ENCODE measurements at regions of chr12 and their contacts with region 1.

Region 1: DNA sequence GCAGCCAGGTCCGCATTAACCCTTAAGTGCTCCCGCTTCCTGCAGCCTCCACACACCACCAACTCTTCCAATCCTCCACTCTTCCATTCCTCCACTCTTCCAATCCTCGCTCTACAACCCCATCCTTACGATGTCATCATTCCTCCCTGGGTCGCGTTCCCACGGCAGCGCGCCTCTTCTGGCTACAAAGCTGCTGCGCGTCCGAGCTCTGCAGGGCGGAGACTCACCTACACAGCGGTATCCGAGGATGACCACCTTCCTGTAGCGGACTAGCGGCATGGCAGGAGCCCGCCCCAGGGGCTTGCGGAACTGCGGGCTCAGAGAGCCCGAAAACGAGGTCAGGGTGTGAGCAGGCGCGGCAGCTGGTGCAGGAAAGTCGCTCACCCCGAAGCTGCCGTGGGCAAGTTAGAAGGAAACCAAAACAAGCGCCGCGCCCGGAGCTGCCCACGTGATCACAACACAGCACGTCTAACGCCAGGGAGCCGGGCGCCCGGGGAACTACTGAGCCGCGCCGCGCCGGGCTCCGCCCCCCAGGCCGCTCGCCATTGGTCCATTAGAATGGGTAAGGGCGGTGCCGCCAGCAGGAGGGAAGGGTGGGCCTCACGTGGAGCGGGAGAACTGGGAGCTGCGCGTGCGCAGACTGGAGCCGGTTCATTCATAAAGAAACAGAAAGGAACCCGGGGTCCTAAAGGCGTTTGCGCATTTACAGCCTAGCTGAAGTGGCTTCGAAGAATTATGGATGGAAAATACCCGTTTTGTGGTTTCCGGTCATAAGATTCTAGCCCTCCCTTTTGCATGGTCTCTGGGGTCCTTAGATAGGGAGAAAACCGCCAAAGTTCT is at the start of gene RHEBL1:
- DNase-seq: peak; percentile 98
- ATAC-seq: peak; percentile 99
- H3K4me3 ChIP-seq: peak within 1 kb of the TSS; percentile 91
- H3K27ac ChIP-seq: no peak within 1 kb of the TSS
- H3K4me1 ChIP-seq: peaks cover 10% of the 10 kb centered on the region; the same call in 1 of the 2 replicates
- H3K27me3 ChIP-seq: no peaks in the 10 kb centered on the region
- CTCF ChIP-seq: peak; percentile 38
- total RNA-seq, gene RHEBL1: 4.2 and 5.0 TPM in 2 replicates

Region 2: DNA sequence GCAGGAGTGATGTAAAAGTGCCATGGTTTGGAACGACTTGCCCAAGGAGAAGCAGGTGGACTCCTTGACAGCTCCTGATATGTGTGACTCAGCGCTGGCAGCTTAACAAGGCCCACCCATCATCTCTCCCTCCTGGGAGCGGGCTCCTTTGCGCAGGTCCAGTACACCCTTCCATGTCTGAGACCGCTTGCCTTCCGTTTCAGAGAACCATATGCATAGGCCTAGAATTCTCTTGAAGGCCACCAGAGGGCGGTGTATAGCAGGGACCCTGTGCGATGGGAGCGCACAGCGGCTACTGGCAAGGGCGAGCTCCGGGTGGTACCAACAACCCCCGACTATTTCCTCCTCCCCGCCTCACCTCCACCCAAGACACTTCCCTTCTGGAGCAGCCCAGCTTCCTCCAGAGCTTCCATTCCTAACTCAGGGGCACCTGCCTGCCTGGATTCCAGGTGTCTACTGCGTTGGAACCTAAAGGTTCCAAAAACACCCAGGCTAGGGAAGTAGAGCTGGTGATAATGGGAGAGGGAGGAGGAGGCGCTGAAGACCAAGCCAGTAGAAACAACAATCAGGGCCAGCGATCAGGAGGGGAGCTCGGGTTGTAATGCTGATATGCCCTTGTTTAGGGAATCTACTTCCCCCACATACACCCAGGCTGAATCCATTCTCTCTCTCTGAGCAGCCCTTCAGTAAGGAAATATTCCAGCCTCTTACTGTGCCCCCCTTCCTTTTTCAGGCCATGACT is 18.6 kb after region 1 on chr12:
- CTCF ChIA-PET with region 1: interaction called, 25 read pairs
- POLR2A ChIA-PET with region 1: no interaction called
- intact Hi-C with region 1: loop called (anchors 1 kb)
- DNase-seq: peak; percentile 95
- ATAC-seq: peak; percentile 80
- H3K4me3 ChIP-seq: peak overlapping the region; percentile 59
- H3K27ac ChIP-seq: no peak overlapping the region
- H3K4me1 ChIP-seq: peaks cover 24% of the 10 kb centered on the region
- H3K27me3 ChIP-seq: peaks cover 26% of the 10 kb centered on the region
- CTCF ChIP-seq: peak; percentile 94

Region 3: GRCh38 chr12:49170924-49171323 is 101.2 kb after region 1 on chr12:
- CTCF ChIA-PET with region 1: no interaction called
- POLR2A ChIA-PET with region 1: no interaction called
- intact Hi-C with region 1: no loop called
- DNase-seq: no peak
- ATAC-seq: no peak
- H3K4me3 ChIP-seq: no peak overlapping the region
- H3K27ac ChIP-seq: no peak overlapping the region
- H3K4me1 ChIP-seq: no peaks in the 10 kb centered on the region
- H3K27me3 ChIP-seq: no peaks in the 10 kb centered on the region
- CTCF ChIP-seq: no peak

Region 4: DNA sequence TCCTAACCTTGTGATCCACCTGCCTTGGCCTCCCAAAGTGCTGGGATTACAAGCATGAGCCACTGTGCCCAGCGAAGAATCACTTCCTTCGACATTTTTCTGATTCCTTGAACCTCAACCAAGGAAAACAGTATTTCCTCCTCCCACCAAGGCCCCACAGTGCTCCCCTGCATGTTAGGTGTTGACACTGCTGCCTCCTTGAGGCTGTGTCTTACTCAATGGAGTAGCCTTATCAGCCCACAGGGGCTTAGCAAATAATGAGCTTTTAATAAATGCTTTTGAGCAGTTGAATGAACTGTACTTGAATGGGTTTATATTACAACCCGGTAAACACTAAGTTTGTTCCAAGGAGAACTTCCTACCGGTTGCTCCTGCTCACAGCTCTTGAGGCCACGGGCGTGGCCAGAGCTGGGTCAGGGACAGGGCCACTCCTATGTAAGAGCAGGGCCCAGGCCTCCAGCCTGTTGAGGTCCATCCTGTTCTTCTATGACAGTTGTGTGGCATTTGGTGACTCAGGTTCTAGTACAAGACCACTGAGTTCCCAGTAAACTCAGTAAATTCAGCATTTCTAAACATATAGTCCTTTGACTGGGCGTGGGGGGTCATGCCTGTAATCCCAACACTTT is 155.9 kb after region 1 on chr12:
- CTCF ChIA-PET with region 1: no interaction called
- POLR2A ChIA-PET with region 1: no interaction called
- intact Hi-C with region 1: no loop called
- DNase-seq: peak; percentile 47
- ATAC-seq: peak; percentile 38; the same call in 1 of the 2 replicates
- H3K4me3 ChIP-seq: no peak overlapping the region
- H3K27ac ChIP-seq: no peak overlapping the region
- H3K4me1 ChIP-seq: peaks cover 7% of the 10 kb centered on the region; the same call in 1 of the 2 replicates
- H3K27me3 ChIP-seq: no peaks in the 10 kb centered on the region
- CTCF ChIP-seq: no peak